Dendritic cell treated with granulocyte-macrophage colony-stimulating factor and Interleukin-4, amounts not matched to agents 40 ng/mL and 50 ng/mL, for 4 days (primary cell): ENCODE measurements at regions of chr2 and their contacts with region 1.

Region 1: DNA sequence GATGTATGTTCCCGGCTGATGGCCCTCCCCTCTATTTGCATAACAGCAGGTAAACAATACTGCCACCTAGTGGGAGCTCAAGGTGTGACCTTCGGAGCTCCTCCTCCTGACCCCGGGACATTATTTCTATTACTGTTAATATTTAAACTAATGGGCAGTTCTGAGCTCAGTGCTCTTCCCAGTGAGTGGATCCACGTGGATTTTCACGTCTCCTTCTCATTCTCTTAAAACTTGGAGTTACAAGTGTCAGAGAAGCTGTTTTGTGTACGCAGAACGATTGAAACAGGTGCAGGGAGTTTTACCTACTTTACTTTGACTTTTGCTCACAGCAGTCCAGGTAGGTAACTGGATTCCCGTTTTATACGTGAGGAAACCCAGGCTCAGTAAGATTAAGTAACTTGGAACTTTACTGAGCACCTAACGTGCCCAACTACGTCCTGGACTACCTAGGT is 127.3 kb downstream of the PRKCE start:
- H3K4me3 Mint-ChIP-seq: no peak overlapping the region
- H3K27ac Mint-ChIP-seq: no peak overlapping the region
- H3K4me1 Mint-ChIP-seq: peaks cover 54% of the 10 kb centered on the region
- H3K27me3 Mint-ChIP-seq: peaks cover 9% of the 10 kb centered on the region

Region 2: GRCh38 chr2:45643543-45644542 is 134.9 kb before region 1 on chr2:
- intact Hi-C with region 1: loop called (anchors 1 kb)
- H3K4me3 Mint-ChIP-seq: peak overlapping the region; percentile 78
- H3K27ac Mint-ChIP-seq: peak overlapping the region; percentile 79
- H3K4me1 Mint-ChIP-seq: peaks cover 13% of the 10 kb centered on the region
- H3K27me3 Mint-ChIP-seq: peaks cover 53% of the 10 kb centered on the region

Region 3: GRCh38 chr2:45699032-45699658 is 79.6 kb before region 1 on chr2:
- intact Hi-C with region 1: no loop called
- H3K4me3 Mint-ChIP-seq: no peak overlapping the region
- H3K27ac Mint-ChIP-seq: no peak overlapping the region
- H3K4me1 Mint-ChIP-seq: peaks cover 16% of the 10 kb centered on the region
- H3K27me3 Mint-ChIP-seq: no peaks in the 10 kb centered on the region

Region 4: DNA sequence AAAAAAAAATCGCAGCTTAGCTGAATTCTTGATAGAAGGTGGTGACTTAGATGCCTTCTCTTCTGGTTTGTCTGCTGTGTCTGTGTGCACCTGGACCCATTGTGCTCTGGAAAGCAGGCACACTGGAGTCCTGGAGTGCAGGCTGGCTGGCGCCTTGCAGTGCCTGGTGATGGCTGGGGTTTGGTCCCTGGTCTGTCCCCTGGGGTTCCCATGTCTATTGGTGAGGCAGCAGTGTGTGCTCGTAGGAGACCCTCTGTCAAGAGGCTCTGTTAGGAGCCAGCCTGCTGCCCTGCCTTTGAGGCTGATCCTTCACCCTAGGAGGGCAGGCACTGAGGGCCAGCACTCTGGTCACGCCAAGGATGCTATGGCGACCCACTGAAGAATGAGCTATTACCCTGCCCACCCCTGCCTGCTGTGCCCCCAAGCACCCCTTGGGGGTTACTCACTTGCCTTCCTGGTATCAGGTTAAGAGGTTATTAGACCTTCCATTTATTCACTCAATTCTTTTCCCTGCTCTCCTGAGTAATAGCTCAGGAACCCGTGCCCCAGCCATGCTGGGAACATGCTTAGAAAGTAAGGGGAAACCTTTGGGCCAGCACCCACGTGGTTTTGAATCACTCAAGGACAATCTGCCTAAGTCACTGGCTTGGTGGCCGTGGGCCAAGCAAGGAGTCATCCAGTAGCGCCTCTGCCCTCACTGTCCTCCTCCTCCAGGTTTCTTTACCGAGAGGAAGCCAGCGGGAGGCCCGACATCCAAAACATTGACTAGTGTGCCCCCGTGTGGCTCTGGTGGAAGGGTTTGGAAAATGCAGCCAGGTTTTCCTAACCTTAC is 157.3 kb after region 1 on chr2:
- intact Hi-C with region 1: loop called (anchors 2 kb)
- H3K4me3 Mint-ChIP-seq: no peak overlapping the region
- H3K27ac Mint-ChIP-seq: no peak overlapping the region
- H3K4me1 Mint-ChIP-seq: peaks cover 6% of the 10 kb centered on the region
- H3K27me3 Mint-ChIP-seq: peaks cover 2% of the 10 kb centered on the region